ENCODE measurements at regions of chr6 and their contacts with region 1.

Region 1: DNA sequence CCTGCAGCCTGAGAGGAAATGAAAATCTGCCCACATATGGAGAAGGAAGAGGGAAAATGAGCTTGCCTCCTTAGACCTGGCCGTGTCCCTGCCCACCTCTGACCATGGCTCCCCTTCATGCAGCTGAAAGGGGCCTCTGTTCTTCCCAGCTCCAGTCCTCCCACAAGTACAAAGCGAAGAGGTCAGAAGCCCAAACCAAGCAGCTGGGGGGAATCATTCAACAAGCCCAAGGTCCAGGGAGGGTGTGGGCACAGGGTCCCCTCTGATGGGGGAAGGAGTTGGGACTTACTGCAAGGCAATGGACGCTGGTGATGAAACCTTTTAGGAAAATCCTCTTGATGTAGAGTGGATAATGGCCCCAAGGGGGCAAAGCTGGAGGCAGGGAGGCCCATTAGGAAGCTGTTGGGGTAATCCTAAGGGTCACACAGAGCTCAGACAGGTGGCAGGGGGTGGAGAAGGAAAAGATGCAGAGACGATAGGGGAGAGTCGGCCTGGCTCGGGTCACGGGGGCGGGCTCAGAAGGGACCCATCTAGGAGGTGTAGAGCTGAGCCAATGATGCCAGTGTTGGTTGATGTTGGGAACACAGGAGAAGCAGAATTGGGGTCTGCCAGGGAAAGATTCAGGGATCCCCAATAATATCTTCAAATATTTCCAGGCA is 16.1 kb upstream of the GRM4 start:
- DNase-seq: no peak
- ATAC-seq: no peak
- H3K4me3 Mint-ChIP-seq: no peak overlapping the region
- H3K27ac Mint-ChIP-seq: no peak overlapping the region
- H3K4me1 Mint-ChIP-seq: no peaks in the 10 kb centered on the region
- H3K27me3 Mint-ChIP-seq: no peaks in the 10 kb centered on the region

Region 2: GRCh38 chr6:34120953-34121675 is 40.9 kb before region 1 on chr6:
- CTCF ChIA-PET with region 1: no interaction called
- POLR2A ChIA-PET with region 1: no interaction called
- intact Hi-C with region 1: no loop called
- DNase-seq: no peak
- ATAC-seq: no peak
- H3K4me3 Mint-ChIP-seq: no peak overlapping the region
- H3K27ac Mint-ChIP-seq: no peak overlapping the region
- H3K4me1 Mint-ChIP-seq: no peaks in the 10 kb centered on the region
- H3K27me3 Mint-ChIP-seq: no peaks in the 10 kb centered on the region

Region 3: GRCh38 chr6:34189806-34190503 is 28.0 kb after region 1 on chr6:
- CTCF ChIA-PET with region 1: interaction called, 15 read pairs
- POLR2A ChIA-PET with region 1: no interaction called
- intact Hi-C with region 1: loop called in 1 of 2 experiments (anchors 1 kb)
- DNase-seq: peak; percentile 78
- ATAC-seq: peak; percentile 81
- H3K4me3 Mint-ChIP-seq: no peak overlapping the region
- H3K27ac Mint-ChIP-seq: no peak overlapping the region
- H3K4me1 Mint-ChIP-seq: peaks cover 11% of the 10 kb centered on the region
- H3K27me3 Mint-ChIP-seq: no peaks in the 10 kb centered on the region

Region 4: DNA sequence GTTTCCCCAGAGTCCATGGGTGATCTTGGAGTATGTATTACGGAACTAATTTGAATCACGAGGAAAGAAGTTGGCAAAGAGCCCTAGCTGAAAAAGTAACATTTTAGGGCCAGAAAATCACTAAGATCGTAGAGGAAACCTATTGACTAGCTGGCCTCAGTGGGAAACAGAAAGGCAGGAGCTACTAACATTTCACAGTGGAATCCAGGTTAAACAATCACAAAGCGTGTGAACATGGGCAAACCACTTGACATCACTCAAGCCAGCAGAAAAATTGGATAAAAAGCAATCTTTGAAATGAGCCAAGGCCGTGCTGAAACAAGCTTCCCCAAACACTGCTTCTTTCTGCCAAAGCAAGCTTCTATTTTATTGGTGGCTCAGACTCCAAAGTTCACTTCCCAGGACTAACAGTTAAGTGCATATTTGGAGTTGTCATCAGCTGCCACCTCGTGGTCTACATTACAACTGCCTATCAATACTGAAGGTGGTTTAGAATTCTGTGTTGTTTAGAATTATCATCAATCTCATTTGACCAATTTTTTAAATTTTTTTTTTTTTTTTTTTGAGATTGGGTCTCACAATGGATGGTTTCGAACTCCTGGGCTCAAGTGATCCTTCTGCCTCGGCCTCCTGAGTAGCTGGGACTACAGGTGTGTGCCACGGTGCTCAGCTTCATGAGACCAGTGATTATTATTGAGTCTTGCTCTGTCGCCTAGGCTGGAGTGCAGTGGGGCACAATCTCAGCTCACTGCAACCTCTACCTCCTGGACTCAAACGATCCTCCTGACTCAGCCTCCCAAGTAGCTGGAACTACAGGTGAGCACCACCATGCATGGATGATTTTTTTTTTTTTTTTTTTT is 253.2 kb after region 1 on chr6:
- CTCF ChIA-PET with region 1: interaction called, 19 read pairs
- POLR2A ChIA-PET with region 1: interaction called, 4 read pairs
- intact Hi-C with region 1: loop called in 1 of 2 experiments (anchors 2 kb)
- DNase-seq: peak; percentile 48
- ATAC-seq: peak; percentile 57
- H3K4me3 Mint-ChIP-seq: no peak overlapping the region
- H3K27ac Mint-ChIP-seq: peak overlapping the region; percentile 51
- H3K4me1 Mint-ChIP-seq: peaks cover 15% of the 10 kb centered on the region
- H3K27me3 Mint-ChIP-seq: no peaks in the 10 kb centered on the region

Region 5: GRCh38 chr6:34602318-34603111 is 440.5 kb after region 1 on chr6:
- CTCF ChIA-PET with region 1: interaction called, 6 read pairs
- POLR2A ChIA-PET with region 1: no interaction called
- intact Hi-C with region 1: loop called in 1 of 2 experiments (anchors 10 kb)
- DNase-seq: no peak
- ATAC-seq: no peak
- H3K4me3 Mint-ChIP-seq: no peak overlapping the region
- H3K27ac Mint-ChIP-seq: no peak overlapping the region
- H3K4me1 Mint-ChIP-seq: peaks cover 17% of the 10 kb centered on the region
- H3K27me3 Mint-ChIP-seq: no peaks in the 10 kb centered on the region

Measured in activated CD4-positive, alpha-beta T cell treated with anti-CD3 and anti-CD28 coated beads for 36 hours (primary cell).